Esophagus muscularis mucosa (tissue), 4 donors: ENCODE measurements at regions of chr9 and their contacts with region 1.

Region 1: DNA sequence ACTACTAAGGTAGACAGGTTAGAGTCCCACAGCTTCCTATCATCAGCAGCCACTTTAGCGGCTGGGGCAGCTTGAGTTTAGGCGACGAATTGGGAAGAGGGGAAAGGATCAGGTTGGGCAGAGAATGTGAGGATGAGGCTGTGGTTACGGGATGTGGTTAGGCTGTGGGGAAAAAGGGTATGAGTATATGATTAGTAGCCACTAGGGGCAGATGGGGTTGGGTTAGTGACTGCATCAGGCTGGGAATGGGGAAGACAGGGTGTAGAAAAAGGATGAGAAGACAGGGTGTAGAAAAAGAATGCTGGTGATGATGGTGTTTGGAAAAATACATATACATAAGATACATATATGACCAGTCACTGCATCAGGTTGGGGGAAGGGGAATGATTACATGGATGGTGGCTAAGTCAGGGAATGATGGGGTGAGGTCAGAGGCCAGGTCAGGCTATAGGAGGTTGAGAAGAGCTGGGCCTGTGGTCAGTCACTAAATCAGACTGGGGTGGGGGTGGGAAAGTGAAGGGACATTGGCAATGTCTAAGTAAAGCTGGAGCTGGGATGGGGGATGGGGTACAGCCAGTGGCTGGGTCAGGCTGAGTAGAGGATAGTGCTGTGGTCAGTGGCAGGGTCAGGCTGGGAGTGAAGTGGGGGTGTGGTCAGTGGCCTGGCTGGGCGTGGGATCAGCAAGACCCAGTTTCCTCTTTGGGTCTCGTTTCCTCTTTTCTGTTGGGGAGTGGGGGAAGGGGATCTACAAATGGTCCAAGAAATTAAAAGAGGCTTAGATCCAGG is 2.1 kb downstream of the TLN1 start:
- DNase-seq: no peak
- H3K4me3 ChIP-seq: peak overlapping the region; percentile 81 to 96 (median 86)
- H3K27ac ChIP-seq: peak overlapping the region; percentile 97 to 99 (median 99)
- H3K4me1 ChIP-seq: peaks cover 61 to 85% (median 84%) of the 10 kb centered on the region in 4 donors
- H3K27me3 ChIP-seq: no peaks in the 10 kb centered on the region
- CTCF ChIP-seq: peak; percentile 51 to 63 (median 62)
- EP300 ChIP-seq: no peak
- POLR2A ChIP-seq: peak; percentile 32

Region 2: GRCh38 chr9:35313916-35314315 is 416.0 kb before region 1 on chr9:
- intact Hi-C with region 1: no loop called
- DNase-seq: no peak
- H3K4me3 ChIP-seq: no peak overlapping the region
- H3K27ac ChIP-seq: peak overlapping the region in 1 of 4 donors; percentile 41
- H3K4me1 ChIP-seq: peaks cover 11 to 24% (median 22%) of the 10 kb centered on the region in 4 donors
- H3K27me3 ChIP-seq: no peaks in the 10 kb centered on the region
- CTCF ChIP-seq: no peak
- EP300 ChIP-seq: no peak
- POLR2A ChIP-seq: no peak

Region 3: DNA sequence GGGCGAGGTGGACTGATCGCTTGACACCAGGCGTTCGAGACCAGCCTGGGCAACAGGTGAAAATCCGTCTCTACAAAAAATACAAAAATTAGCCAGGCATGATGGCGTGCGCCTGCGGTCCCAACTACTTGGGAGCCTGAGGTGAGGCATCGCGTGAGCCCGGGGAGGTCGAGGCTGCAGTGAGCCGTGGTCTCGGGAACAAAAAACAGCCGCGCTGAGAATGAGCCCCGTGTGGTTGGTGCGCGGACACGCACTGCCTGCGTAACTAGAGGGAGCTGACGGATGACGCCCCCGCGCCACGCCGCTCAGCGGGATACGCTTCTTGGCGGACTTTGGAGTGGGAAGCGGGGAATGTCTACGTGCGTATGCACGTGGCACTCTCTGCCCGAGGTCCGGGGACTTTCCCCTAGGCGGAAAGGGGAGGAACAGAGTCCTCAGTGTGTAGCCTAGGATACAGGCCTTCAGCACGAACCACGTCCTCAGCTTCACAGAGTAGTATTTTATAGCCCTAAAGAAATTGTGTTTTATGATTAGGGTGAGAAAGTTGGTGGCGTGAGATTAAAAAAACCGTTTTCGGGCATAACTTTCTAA is 72.3 kb before region 1 on chr9 and contains the start of gene RMRP:
- intact Hi-C with region 1: loop called (anchors 2 kb)
- DNase-seq: peak; percentile 99
- H3K4me3 ChIP-seq: peak within 1 kb of the TSS; percentile 68 to 97 (median 82)
- H3K27ac ChIP-seq: peak within 1 kb of the TSS; percentile 95 to 99 (median 98)
- H3K4me1 ChIP-seq: peaks cover 43 to 54% (median 51%) of the 10 kb centered on the region in 4 donors
- H3K27me3 ChIP-seq: no peaks in the 10 kb centered on the region
- CTCF ChIP-seq: peak in 2 of 3 experiments; percentile 41 to 53
- EP300 ChIP-seq: peak; percentile 97
- POLR2A ChIP-seq: peak; percentile 58
- total RNA-seq, gene RMRP: 1,899 to 6,162 (median 2,510) TPM

Region 4: GRCh38 chr9:35690431-35691333 is 39.2 kb before region 1 on chr9:
- intact Hi-C with region 1: loop called (anchors 2 kb)
- DNase-seq: peak; percentile 96
- H3K4me3 ChIP-seq: peak overlapping the region; percentile 72 to 90 (median 86)
- H3K27ac ChIP-seq: peak overlapping the region; percentile 95 to 98 (median 96)
- H3K4me1 ChIP-seq: peaks cover 23 to 56% (median 47%) of the 10 kb centered on the region in 4 donors
- H3K27me3 ChIP-seq: no peaks in the 10 kb centered on the region
- CTCF ChIP-seq: no peak
- EP300 ChIP-seq: no peak
- POLR2A ChIP-seq: peak; percentile 39